Activated CD8-positive, alpha-beta T cell treated with anti-CD3 and anti-CD28 coated beads, Interleukin-2, amount 10 ng/mL, durations not matched to agents 7 days and 5 days (primary cell): ENCODE measurements at regions of chr16 and their contacts with region 1.

Region 1: DNA sequence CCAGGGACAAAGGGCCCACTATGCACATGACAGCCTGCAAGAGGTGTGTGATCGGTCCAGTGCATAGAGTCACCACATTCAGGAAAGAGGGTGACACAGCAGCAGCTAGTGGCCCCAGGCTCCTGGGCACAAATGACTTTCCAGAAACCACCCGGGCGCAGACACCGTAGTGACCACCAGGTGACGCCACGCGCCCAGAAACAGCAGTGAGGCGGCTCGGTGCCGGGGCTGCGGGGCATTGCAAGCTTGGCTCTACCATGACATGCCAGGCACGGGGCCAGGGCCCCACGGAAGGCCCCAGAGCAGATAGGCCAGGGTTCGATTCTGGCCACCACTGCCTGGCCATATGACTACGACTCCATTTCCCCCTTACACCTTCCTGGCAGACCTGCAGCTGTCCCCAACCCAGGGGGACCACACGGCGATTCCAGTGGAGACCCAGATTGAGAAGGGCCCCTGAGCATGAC is 6.7 kb downstream of the RHBDF1 start:
- DNase-seq: peak; percentile 89
- ATAC-seq: peak; percentile 90
- H3K4me3 Mint-ChIP-seq: no peak overlapping the region
- H3K27ac Mint-ChIP-seq: no peak overlapping the region
- H3K4me1 Mint-ChIP-seq: peaks cover 5% of the 10 kb centered on the region
- H3K27me3 Mint-ChIP-seq: peaks cover 10% of the 10 kb centered on the region

Region 2: GRCh38 chr16:77807-78443 is 12.2 kb after region 1 on chr16 and contains the start of gene MPG:
- CTCF ChIA-PET with region 1: interaction called, 35 read pairs
- POLR2A ChIA-PET with region 1: interaction called, 5 read pairs
- DNase-seq: peak; percentile 87
- ATAC-seq: peak; percentile 80
- H3K4me3 Mint-ChIP-seq: peak within 1 kb of the TSS; percentile 87
- H3K27ac Mint-ChIP-seq: peak within 1 kb of the TSS; percentile 87
- H3K4me1 Mint-ChIP-seq: peaks cover 32% of the 10 kb centered on the region
- H3K27me3 Mint-ChIP-seq: peaks cover 13% of the 10 kb centered on the region
- total RNA-seq, gene MPG: 48.6 to 49.3 TPM

Region 3: GRCh38 chr16:91484-91883 is 25.8 kb after region 1 on chr16:
- CTCF ChIA-PET with region 1: interaction called, 265 read pairs
- POLR2A ChIA-PET with region 1: interaction called, 32 read pairs
- DNase-seq: no peak
- ATAC-seq: no peak
- H3K4me3 Mint-ChIP-seq: no peak overlapping the region
- H3K27ac Mint-ChIP-seq: no peak overlapping the region
- H3K4me1 Mint-ChIP-seq: peaks cover 2% of the 10 kb centered on the region
- H3K27me3 Mint-ChIP-seq: no peaks in the 10 kb centered on the region

Region 4: GRCh38 chr16:106623-107324 is 41.1 kb after region 1 on chr16:
- CTCF ChIA-PET with region 1: interaction called, 67 read pairs
- POLR2A ChIA-PET with region 1: no interaction called
- DNase-seq: peak; percentile 75
- ATAC-seq: peak; percentile 89
- H3K4me3 Mint-ChIP-seq: no peak overlapping the region
- H3K27ac Mint-ChIP-seq: no peak overlapping the region
- H3K4me1 Mint-ChIP-seq: no peaks in the 10 kb centered on the region
- H3K27me3 Mint-ChIP-seq: no peaks in the 10 kb centered on the region